Activated CD8-positive, alpha-beta T cell treated with anti-CD3 and anti-CD28 coated beads for 36 hours (primary cell): ENCODE measurements at regions of chr10 and their contacts with region 1.

Region 1: DNA sequence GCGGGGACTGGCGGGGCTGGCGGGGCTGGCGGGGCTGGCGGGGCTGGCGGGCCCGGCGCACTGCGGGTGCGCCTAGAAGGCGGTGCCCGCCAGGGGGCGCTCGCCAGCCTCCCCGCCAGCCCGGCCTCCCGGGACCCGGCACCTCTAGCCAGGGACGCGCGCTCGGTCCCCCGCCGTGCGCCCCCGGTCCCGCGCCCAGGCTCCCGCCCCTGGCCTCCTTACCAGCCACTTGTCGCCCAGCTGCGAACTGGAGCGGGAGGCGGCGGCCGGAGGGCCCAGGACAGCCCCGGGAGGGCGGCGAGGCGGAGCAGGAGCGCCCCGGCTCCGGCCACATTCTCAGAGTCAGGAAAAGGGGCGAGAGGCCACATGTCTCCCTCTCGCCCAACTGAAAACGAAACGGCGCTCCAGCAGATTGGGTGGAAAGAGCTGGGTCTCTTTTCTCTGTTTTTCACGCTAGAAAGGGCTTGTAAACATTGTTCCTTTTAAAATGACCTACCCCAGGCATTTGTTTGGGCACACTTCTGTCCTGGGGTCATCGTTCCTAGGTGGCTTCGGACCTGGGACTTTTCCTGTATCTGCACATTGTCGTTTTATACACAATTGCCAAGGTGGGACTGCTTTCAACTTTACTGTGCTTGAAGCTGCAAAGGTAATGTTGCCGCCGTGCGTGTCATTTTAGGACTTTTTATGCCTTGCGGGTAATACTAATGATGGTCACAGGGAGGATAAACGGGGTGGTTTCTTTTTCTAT is 378 bp upstream of the PRKCQ start:
- DNase-seq: peak; percentile 87
- ATAC-seq: peak; percentile 56
- H3K4me3 Mint-ChIP-seq: peak overlapping the region; percentile 98
- H3K27ac Mint-ChIP-seq: peak overlapping the region; percentile 98
- H3K4me1 Mint-ChIP-seq: peaks cover 41% of the 10 kb centered on the region
- H3K27me3 Mint-ChIP-seq: no peaks in the 10 kb centered on the region
- CTCF ChIP-seq: peak; percentile 40

Region 2: DNA sequence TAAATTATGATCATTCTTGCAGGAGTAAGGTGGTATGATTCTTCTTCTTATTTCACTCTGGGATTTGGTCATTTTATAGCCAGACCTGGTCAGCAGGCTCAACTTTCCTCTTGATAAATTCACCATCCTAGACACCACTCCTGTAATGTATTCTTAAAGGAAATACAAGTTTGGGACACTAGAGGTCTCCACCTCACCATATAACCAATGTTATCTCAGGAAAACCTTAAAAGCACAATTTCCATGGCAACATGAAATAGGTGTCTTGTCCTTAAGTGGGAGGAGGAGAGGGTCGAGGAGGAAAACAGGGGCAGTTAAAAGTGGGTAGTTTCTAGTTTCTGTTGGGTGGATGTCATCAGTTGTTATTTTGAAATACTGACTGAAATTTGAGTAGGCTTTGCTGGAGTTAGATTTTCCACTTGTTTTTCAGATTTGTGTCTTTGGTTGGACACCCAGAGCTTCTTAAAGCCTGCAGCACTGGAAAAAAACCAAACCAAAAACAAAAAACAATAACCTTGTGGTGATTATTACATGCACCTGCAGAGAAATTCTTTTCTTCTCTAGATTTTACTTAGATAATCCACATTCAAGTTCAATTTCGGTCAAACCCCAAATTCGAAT is 163.5 kb before region 1 on chr10:
- CTCF ChIA-PET with region 1: interaction called, 3 read pairs
- POLR2A ChIA-PET with region 1: no interaction called
- intact Hi-C with region 1: loop called (anchors 5 kb)
- DNase-seq: no peak
- ATAC-seq: peak; percentile 82
- H3K4me3 Mint-ChIP-seq: no peak overlapping the region
- H3K27ac Mint-ChIP-seq: no peak overlapping the region
- H3K4me1 Mint-ChIP-seq: peaks cover 1% of the 10 kb centered on the region
- H3K27me3 Mint-ChIP-seq: no peaks in the 10 kb centered on the region
- CTCF ChIP-seq: peak; percentile 83

Region 3: GRCh38 chr10:6498771-6499170 is 81.7 kb before region 1 on chr10:
- CTCF ChIA-PET with region 1: interaction called, 14 read pairs
- POLR2A ChIA-PET with region 1: interaction called, 21 read pairs
- intact Hi-C with region 1: loop called (anchors 2 kb)
- DNase-seq: peak; percentile 51
- ATAC-seq: peak; percentile 62
- H3K4me3 Mint-ChIP-seq: peak overlapping the region; percentile 33
- H3K27ac Mint-ChIP-seq: peak overlapping the region; percentile 89
- H3K4me1 Mint-ChIP-seq: peaks cover 31% of the 10 kb centered on the region
- H3K27me3 Mint-ChIP-seq: no peaks in the 10 kb centered on the region
- CTCF ChIP-seq: no peak

Region 4: DNA sequence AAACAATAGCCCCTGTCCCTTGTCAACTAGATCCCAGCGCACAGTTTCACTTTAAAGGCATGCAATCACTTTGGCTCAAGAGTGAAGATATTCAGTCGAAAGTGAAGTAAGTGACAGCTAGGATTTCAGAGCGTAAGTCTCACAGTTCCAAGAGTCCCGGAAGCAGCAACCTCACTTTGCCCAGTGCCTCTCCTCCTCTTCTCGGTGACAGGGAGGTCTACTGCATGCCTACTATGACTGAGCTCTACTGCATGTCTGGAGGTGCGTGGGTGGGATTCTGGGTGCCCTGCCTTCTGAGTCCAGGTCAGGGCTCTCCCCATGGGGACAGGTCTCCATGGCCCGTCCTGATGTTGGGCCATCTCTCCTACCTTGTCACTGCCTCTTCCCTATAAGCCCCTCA is 17.4 kb before region 1 on chr10:
- CTCF ChIA-PET with region 1: interaction called, 10 read pairs
- POLR2A ChIA-PET with region 1: interaction called, 14 read pairs
- intact Hi-C with region 1: no loop called
- DNase-seq: peak; percentile 90
- ATAC-seq: peak; percentile 89
- H3K4me3 Mint-ChIP-seq: peak overlapping the region; percentile 71
- H3K27ac Mint-ChIP-seq: peak overlapping the region; percentile 88
- H3K4me1 Mint-ChIP-seq: peaks cover 88% of the 10 kb centered on the region
- H3K27me3 Mint-ChIP-seq: no peaks in the 10 kb centered on the region
- CTCF ChIP-seq: no peak

Region 5: GRCh38 chr10:6642876-6643275 is 62.4 kb after region 1 on chr10:
- CTCF ChIA-PET with region 1: interaction called, 32 read pairs
- POLR2A ChIA-PET with region 1: interaction called, 18 read pairs
- intact Hi-C with region 1: loop called (anchors 5 kb)
- DNase-seq: no peak
- ATAC-seq: no peak
- H3K4me3 Mint-ChIP-seq: no peak overlapping the region
- H3K27ac Mint-ChIP-seq: peak overlapping the region; percentile 67
- H3K4me1 Mint-ChIP-seq: peaks cover 44% of the 10 kb centered on the region
- H3K27me3 Mint-ChIP-seq: no peaks in the 10 kb centered on the region
- CTCF ChIP-seq: no peak

Region 6: DNA sequence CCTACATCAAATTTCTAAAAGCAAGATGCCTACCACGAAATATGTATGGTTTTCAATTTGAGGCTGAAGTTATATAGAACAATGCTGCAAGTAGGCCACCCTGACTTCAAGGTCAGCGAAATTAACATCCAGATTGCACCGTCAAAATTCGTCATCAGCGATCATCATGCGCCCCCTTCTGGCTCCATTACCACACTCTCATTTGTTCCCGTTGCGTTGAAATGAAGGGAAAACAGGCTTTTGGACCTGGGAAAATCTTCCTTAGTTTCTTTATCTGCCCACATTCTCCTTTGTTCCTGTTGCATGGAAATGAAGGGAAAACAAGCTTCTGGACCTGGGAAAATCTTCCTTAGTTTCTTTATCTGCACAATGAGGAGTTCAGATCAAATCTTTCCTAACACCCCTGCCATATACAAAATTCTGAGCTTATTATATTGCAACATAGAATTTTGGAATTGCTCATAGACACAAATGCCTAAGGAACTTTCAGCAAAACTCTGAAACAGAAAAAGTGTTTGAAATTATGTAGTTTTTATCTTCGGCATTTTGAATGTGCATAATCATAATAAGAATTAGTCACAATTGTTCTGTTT is 97.9 kb after region 1 on chr10:
- CTCF ChIA-PET with region 1: interaction called, 13 read pairs
- POLR2A ChIA-PET with region 1: interaction called, 7 read pairs
- intact Hi-C with region 1: no loop called
- DNase-seq: peak; percentile 80
- ATAC-seq: peak; percentile 47
- H3K4me3 Mint-ChIP-seq: no peak overlapping the region
- H3K27ac Mint-ChIP-seq: no peak overlapping the region
- H3K4me1 Mint-ChIP-seq: peaks cover 4% of the 10 kb centered on the region
- H3K27me3 Mint-ChIP-seq: peaks cover 17% of the 10 kb centered on the region
- CTCF ChIP-seq: peak; percentile 80

Region 7: DNA sequence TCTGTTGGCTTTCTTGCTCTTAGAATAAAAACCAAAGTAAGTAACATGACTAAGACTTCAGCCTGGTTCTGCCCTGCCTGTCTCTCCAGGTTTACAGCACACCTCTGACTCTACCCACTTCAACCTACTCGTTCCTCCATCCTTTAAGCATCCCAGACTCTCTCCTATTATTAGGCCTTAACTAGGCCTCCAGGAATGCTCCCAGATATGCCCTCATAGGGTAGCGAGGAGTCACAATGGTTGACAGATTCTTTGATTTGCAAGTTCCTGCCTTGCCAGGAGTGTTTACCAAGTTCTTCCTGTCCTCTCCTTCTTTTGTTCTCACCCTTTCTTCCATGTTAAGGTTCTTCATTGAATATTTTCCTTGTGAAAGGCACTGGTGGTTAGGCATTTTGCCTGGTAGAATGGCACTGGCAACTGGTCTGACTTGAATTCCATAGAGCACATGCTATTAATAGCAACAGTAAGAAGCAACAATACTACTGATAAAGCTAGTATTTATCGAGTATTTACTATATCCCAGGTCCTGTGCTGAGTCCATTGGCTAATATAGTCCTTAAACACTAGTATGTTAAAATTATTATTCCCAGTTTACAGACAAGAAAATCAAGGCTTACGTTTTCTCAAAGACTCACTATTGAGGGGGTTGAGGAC is 327.6 kb after region 1 on chr10:
- CTCF ChIA-PET with region 1: no interaction called
- POLR2A ChIA-PET with region 1: no interaction called
- intact Hi-C with region 1: no loop called
- DNase-seq: no peak
- ATAC-seq: no peak
- H3K4me3 Mint-ChIP-seq: no peak overlapping the region
- H3K27ac Mint-ChIP-seq: no peak overlapping the region
- H3K4me1 Mint-ChIP-seq: no peaks in the 10 kb centered on the region
- H3K27me3 Mint-ChIP-seq: no peaks in the 10 kb centered on the region
- CTCF ChIP-seq: no peak

Region 8: DNA sequence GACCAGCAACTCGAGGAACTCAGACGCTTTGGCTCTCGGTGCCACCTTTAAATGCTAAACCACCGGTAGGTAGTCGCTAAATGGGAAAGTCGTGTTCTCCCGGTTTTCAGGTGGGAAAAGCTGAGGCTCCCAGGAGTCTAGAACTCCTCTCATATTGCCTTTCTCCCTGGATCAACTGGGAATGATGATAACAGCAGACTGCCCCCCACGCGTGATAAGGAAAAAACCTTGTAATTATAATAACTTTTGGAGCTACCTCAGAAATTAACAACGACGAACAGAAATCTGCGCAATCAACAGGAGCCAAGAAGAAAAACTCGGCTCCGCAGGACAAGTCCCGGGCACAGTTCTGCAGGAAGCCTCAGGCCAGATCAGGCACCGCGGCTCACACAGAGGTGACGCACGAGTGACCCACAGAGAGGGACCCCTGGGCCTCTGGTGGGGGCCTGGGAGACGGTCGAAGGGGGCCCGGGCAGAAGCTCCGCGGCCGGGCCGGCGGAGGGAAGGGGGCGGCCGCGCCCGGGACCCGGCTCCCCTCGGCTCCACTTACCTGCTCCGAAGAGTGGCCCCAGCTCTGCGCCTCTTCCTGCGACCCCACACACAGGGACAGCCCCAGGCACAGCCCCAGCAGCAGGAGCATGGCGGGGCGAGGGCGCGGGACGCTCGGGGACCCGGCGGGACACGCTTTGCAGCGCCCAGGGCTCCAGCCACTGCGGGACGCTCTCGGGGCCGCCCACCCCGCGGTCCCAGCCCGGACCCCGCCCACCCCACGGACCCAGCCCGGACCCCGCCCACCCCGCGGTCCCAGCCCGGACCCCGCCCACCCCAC is 1086.0 kb after region 1 on chr10 and contains the start of gene ITIH5:
- CTCF ChIA-PET with region 1: no interaction called
- POLR2A ChIA-PET with region 1: no interaction called
- intact Hi-C with region 1: no loop called
- DNase-seq: no peak
- ATAC-seq: peak; percentile 27
- H3K4me3 Mint-ChIP-seq: peak within 1 kb of the TSS; percentile 55
- H3K27ac Mint-ChIP-seq: no peak within 1 kb of the TSS
- H3K4me1 Mint-ChIP-seq: peaks cover 9% of the 10 kb centered on the region
- H3K27me3 Mint-ChIP-seq: peaks cover 44% of the 10 kb centered on the region
- CTCF ChIP-seq: no peak
- total RNA-seq, gene ITIH5: not detected